Right ventricle myocardium inferior (tissue), 1 donor: ENCODE measurements at regions of chr3 and their contacts with region 1.

Region 1: DNA sequence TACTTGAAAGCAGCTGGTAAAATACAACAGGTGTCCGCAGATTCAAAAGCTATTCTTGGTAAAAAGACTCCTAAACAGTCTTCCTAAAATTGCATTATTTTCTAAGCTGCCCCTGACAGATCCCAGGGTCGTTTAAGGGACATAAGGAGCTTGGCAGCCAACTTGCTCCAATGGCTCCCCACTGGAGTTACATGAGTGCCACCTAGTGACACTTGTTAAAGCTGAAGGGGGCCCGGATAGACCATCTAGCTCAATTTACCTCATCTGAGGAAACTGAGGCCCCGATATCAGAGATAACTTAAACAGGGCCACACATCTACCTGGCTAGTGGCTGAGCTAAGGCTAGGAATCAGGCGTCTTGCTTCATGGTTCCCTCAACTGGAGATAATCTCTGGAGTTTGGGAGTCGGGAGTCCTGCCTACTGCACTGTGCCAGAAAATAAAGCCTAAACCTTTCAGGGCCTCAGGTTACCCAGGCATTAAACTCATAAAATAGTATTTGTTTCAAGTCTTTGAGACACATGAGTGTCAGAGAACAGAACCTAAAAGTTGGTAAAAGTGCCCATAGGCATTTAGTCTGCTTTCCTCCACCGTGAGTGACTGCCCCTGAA is 6.5 kb upstream of the TBC1D23 start:
- DNase-seq: peak; percentile 72
- ATAC-seq: peak; percentile 90

Region 2: GRCh38 chr3:99833617-99834205 is 420.6 kb before region 1 on chr3:
- intact Hi-C with region 1: loop called (anchors 2 kb)
- DNase-seq: no peak
- ATAC-seq: peak; percentile 32

Region 3: DNA sequence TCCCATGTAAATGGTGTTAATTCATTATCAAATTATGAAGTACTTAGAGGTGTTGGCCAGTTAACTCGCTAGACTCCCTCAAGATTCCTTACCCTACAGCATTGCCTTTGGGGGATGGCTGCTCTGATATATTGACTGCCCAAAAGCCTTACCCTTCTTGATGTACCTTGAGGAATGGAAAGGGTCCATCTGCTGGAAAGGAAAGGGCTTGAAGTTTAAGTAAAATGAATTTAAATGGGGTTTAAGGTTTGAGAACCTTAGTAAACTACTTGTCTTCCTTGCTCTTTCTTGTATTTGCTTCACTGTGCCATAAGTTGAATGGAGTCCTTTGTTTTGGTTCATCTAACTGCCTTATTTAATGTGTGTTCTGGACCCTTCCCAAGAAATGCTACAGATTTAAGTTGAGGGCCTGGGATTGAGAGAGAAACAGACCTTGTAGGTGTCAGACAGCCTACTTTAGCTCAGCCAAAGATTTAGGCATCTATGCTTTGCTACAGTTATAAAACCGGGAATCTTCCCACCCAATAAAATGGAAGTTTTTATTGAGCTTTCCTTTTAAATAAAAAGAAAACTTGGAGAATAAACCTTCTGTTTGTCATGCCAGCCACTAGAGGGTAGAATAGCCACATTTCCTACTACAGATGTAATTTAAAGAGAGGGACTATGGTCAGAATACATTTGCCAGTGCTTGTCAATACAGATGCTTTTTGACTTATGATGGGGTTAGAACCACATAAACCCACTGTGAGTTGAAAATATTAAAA is 411.3 kb before region 1 on chr3:
- intact Hi-C with region 1: loop called (anchors 1 kb)
- DNase-seq: no peak
- ATAC-seq: peak; percentile 68

Region 4: GRCh38 chr3:99929745-99930139 is 324.5 kb before region 1 on chr3:
- intact Hi-C with region 1: loop called (anchors 5 kb)
- DNase-seq: no peak
- ATAC-seq: peak; percentile 28

Region 5: GRCh38 chr3:100032243-100032642 is 222.0 kb before region 1 on chr3:
- intact Hi-C with region 1: no loop called
- DNase-seq: no peak
- ATAC-seq: no peak

Region 6: GRCh38 chr3:100068826-100069225 is 185.4 kb before region 1 on chr3:
- intact Hi-C with region 1: loop called (anchors 1 kb)
- DNase-seq: peak; percentile 81
- ATAC-seq: peak; percentile 88

Region 7: GRCh38 chr3:100159331-100160153 is 94.7 kb before region 1 on chr3:
- intact Hi-C with region 1: loop called (anchors 5 kb)
- DNase-seq: no peak
- ATAC-seq: no peak